ENCODE measurements at regions of chr12 and their contacts with region 1.

Region 1: DNA sequence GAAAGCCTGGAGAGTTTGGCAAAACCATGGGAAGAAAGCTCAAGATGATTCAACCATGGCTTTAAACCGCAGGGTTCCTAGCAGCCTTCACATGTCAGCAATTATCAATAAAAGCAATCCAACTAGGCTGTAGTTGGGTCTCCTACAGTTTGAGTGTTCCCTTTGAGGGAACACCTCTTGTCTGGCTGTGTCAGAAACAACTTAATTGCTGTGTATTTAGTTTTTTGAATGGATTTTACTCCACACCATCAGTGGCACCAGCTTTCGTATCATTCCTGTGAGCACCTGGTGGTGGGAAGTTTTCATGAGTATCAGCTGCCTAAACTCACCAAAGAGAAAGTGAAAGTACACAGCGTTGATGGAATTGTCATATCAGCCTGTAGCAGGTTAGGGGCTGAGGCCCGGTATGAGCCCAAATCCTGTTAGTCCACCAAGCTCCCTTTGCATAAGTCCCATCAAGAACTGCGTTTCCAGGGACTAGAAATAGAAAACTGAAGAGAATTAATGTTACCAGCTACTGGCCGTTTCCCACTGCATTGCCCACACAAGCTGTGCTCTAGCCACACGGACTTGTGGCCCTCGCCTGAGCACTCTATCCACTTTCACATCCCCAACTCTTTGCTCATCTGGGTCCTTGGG is 10.9 kb upstream of the IL26 start:
- DNase-seq: no peak
- ATAC-seq: peak in 2 of 4 donors; percentile 60 to 68
- H3K4me3 ChIP-seq: peak overlapping the region in 10 of 12 donors; percentile 21 to 57 (median 44)
- H3K27ac ChIP-seq: peak overlapping the region in 9 of 12 donors; percentile 16 to 71 (median 35)
- H3K4me1 ChIP-seq: peaks cover 0 to 33% (median 12%) of the 10 kb centered on the region in 12 donors
- H3K27me3 ChIP-seq: no peaks in the 10 kb centered on the region
- CTCF ChIP-seq: peak in 1 of 12 donors; percentile 9
- POLR2A ChIP-seq: no peak

Region 2: DNA sequence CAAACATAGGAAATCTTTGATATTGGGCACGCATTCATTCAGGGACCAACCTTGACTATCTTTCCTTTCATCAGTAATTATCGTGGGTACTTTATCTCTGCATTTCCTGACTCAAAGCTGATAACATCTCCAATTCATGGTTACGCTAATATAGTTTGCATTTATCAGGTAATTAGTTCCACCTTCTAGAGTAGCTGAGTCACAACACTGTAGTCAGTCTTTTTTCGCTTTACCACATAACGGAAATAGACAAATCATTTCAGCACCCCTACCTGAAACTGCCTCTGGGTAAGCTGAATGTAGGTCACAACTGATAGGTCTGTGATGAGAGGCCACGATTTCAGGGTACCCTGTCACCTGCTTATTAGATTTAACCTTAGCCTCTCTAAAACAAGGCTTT is 53.6 kb after region 1 on chr12:
- intact Hi-C with region 1: loop called in 1 of 10 experiments (anchors 5 kb)
- DNase-seq: no peak
- ATAC-seq: no peak
- H3K4me3 ChIP-seq: no peak overlapping the region
- H3K27ac ChIP-seq: no peak overlapping the region
- H3K4me1 ChIP-seq: peaks cover 0 to 19% (median 6%) of the 10 kb centered on the region in 12 donors
- H3K27me3 ChIP-seq: no peaks in the 10 kb centered on the region
- CTCF ChIP-seq: no peak
- POLR2A ChIP-seq: no peak

Region 3: DNA sequence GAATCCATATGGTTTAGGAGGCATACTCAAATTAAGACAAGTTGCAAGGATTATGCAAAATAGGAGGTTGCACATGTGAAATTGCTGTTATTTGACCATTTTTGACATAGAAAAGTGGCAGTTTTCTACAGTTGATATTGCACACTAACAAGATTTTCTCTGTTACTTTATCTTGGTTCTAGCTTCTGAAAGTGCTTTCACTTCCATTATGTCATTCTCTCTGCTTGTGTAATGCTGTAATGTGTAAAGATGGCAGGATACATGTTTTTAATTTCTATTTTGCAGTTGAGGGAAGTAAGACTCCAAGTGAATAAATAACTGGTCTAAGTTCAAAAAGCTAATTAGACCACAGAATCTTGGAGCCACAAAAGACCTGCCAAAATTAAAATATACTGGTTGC is 1649.1 kb after region 1 on chr12:
- intact Hi-C with region 1: no loop called
- DNase-seq: no peak
- ATAC-seq: no peak
- H3K4me3 ChIP-seq: no peak overlapping the region
- H3K27ac ChIP-seq: no peak overlapping the region
- H3K4me1 ChIP-seq: peaks cover 0 to 17% (median 0%) of the 10 kb centered on the region in 12 donors
- H3K27me3 ChIP-seq: no peaks in the 10 kb centered on the region
- CTCF ChIP-seq: no peak
- POLR2A ChIP-seq: no peak

Measured in heart left ventricle (tissue), 16 donors.